Adrenal gland (tissue), 19 donors: ENCODE measurements at regions of chr12 and their contacts with region 1.

Region 1: GRCh38 chr12:110613771-110614684 is at the start of gene TCTN1:
- DNase-seq: peak; percentile 96 to 98 (median 97)
- H3K4me3 ChIP-seq: peak within 1 kb of the TSS in 2 of 4 donors; percentile 44 to 61
- H3K27ac ChIP-seq: peak within 1 kb of the TSS in 2 of 5 donors; percentile 66 to 73
- H3K4me1 ChIP-seq: peaks cover 9% of the 10 kb centered on the region in 2 donors
- H3K27me3 ChIP-seq: no peaks in the 10 kb centered on the region
- CTCF ChIP-seq: peak in 1 of 6 experiments; percentile 7
- POLR2A ChIP-seq: peak in 1 of 2 donors; percentile 13
- total RNA-seq, gene TCTN1: 37.3 to 79.4 (median 48.7) TPM

Region 2: DNA sequence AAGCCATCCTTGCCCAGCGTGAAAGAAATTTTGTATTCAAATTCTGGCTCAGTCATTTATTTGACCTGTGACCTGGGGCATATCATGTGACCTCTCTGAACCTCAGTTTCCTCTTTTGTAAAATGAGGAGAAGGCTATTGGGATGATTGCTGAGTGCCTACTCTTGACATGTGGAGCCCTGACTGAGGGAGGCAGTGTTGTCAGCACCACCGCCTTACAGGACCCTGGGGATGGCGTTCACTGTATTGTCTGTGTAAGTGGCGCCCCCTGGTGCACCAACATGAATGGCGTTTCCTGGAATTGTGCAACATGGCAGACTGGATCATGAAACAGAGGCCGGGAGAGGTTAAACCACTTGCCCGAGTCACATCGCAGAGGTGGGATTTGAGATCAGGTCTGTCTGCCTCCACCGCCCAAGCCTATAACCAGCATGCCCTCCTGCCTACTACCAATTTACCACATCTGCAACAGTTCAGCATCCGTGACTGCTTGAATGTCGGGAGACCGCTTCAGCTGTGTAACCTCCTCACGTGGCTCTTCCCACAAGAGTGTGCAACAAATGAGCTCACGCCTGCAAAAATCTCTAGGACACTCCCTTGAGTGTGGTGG is 212.7 kb after region 1 on chr12:
- intact Hi-C with region 1: loop called in 1 of 2 experiments (anchors 10 kb)
- DNase-seq: peak; percentile 80 to 97 (median 90)
- H3K4me3 ChIP-seq: no peak overlapping the region
- H3K27ac ChIP-seq: no peak overlapping the region
- H3K4me1 ChIP-seq: no peaks in the 10 kb centered on the region
- H3K27me3 ChIP-seq: no peaks in the 10 kb centered on the region
- CTCF ChIP-seq: peak; percentile 82 to 97 (median 94)
- POLR2A ChIP-seq: no peak

Region 3: DNA sequence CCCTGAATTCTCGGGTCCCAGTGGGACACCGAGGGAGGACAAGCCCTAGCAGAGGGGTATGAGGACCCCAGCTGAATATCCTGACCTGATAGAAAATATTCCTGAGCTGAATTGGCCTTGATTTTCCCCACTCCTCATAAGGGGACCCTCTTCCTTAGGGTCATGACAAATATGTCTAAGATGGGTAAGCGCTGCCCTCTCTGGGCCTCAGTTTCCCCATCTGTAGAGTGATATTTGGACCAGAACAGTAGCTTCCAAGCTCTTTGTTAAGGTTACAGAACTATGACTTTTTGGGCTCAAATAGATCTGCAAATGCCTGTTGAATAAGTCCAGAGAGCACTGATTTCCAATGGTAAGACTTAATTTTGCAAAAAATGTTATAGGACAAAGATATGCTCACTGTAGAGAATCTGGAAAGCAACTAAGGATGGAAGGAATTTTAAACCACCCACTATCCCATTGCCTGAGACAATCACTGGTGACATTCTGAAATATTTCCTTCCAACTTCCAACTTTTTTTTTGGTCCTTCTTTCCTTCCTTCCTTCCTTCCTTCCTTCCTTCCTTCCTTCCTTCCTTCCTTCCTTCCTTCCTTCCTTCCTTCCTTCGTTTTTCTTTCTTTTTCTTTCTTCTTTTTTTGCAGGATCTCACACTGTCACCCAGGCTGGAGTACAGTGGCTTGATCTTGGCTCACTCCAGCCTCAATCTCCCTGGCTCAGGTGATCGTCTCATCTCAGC is 274.4 kb after region 1 on chr12:
- intact Hi-C with region 1: loop called in 1 of 2 experiments (anchors 10 kb)
- DNase-seq: no peak
- H3K4me3 ChIP-seq: no peak overlapping the region
- H3K27ac ChIP-seq: no peak overlapping the region
- H3K4me1 ChIP-seq: no peaks in the 10 kb centered on the region
- H3K27me3 ChIP-seq: no peaks in the 10 kb centered on the region
- CTCF ChIP-seq: no peak
- POLR2A ChIP-seq: no peak